ENCODE measurements at regions of chr19 and their contacts with region 1.

Region 1: DNA sequence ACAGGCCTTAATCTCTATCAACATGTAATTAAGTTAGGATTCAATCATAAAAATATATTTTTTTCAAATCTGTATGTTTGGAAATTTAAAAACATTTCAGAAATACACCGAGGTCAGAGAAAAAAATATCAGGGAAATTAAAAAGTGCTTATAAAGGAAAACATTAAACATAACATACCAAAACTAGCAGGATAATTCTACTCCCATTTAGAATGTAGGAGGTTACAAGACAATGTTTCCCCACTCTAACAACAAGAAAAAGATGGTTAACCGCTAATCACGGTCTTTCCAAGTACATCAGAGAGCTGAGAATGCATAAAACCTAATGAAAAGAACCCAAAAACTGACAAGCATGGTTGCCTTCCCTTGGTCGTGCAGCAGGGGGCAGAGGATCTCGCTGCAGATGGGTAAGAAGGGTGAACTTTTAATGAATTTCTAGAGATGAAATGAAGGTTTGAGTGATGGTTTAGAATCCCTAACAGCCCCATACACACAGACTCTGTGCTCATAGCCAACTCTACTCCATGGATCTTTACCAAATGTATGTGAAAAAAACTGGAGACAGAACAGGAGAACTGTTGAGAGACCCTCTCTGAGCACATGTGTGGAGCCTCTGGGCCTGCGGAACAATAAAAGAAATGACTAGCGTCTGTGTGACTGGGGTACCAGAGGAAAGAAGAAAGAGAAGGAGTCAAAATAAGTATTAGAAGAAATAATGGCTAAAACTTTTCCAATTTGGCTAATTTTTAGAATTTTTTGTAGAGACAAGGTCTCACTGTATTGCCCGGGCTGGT is 51.3 kb upstream of the LSM14A start:
- DNase-seq: peak; percentile 30
- ATAC-seq: no peak
- H3K4me3 ChIP-seq: no peak overlapping the region
- H3K27ac ChIP-seq: no peak overlapping the region
- H3K4me1 ChIP-seq: peaks cover 15% of the 10 kb centered on the region; the same call in 1 of the 2 replicates
- H3K27me3 ChIP-seq: peaks cover 0 to 5% of the 10 kb centered on the region in 2 experiments; a peak in 1 of 5 replicates
- CTCF ChIP-seq: peak; percentile 67
- EP300 ChIP-seq: no peak
- POLR2A ChIP-seq: no peak
- RAD21 ChIP-seq: peak; percentile 43; the same call in 1 of the 2 replicates

Region 2: DNA sequence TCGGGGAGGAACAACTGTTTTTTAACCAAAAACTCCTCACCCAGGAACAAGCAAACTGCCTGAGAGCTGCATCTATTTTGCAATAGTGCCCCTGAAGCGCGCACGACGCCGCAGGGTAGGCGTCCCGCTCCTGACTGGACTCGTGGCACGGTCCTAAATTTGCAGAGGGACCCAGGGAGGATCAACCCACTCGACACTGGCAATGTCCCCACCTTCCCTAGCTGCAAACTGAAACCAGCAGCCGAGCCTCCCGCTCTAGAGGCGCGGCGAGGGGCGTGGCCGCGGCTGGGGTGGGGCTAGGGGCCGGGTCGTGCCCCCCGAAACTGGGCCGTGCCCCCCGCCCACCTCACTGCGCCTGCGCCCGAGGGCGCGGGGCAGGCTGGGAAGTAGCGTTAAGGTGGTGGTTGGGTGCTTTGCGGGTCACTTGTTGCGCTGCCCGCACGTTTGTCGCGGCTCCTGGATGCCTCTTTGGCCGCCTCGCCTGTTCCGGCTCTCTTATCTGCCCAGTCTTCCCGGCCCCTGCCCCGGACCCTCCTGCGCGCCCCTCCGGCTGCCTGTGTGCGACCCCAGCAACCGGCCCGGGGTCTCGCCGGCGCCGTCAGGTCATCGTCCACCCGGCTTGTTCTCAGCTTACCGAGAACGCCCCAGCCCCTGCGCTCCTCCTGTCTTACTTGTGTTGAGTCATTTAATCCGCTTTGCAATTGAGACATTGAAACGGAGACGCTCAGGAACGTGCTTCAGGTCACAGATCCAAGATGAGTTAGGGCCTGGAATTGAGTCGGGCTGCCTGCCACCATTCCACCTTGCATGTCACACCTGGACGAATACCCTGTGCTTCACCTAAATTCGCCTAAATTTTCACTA is 13.4 kb after region 1 on chr19:
- CTCF ChIA-PET with region 1: no interaction called
- POLR2A ChIA-PET with region 1: no interaction called
- in situ Hi-C with region 1: no loop called
- intact Hi-C with region 1: no loop called
- DNase-seq: peak; percentile 70
- ATAC-seq: peak; percentile 94
- H3K4me3 ChIP-seq: peak overlapping the region; percentile 63 to 78 (median 66)
- H3K27ac ChIP-seq: peak overlapping the region; percentile 59
- H3K4me1 ChIP-seq: peaks cover 13% of the 10 kb centered on the region
- H3K27me3 ChIP-seq: no peaks in the 10 kb centered on the region
- CTCF ChIP-seq: no peak
- EP300 ChIP-seq: no peak
- POLR2A ChIP-seq: peak; percentile 85 to 97
- RAD21 ChIP-seq: no peak

Region 3: GRCh38 chr19:34145741-34146202 is 24.7 kb after region 1 on chr19:
- CTCF ChIA-PET with region 1: interaction called, 42 read pairs
- POLR2A ChIA-PET with region 1: no interaction called
- in situ Hi-C with region 1: no loop called
- intact Hi-C with region 1: loop called (anchors 1 kb)
- DNase-seq: peak; percentile 46
- ATAC-seq: peak; percentile 62
- H3K4me3 ChIP-seq: no peak overlapping the region
- H3K27ac ChIP-seq: no peak overlapping the region
- H3K4me1 ChIP-seq: peaks cover 10% of the 10 kb centered on the region; the same call in 1 of the 2 replicates
- H3K27me3 ChIP-seq: no peaks in the 10 kb centered on the region
- CTCF ChIP-seq: peak; percentile 88
- EP300 ChIP-seq: no peak
- POLR2A ChIP-seq: no peak
- RAD21 ChIP-seq: peak; percentile 62

Measured in HepG2 (cell line).